CD8-positive, alpha-beta T cell (primary cell): ENCODE measurements at regions of chr1 and their contacts with region 1.

Region 1: DNA sequence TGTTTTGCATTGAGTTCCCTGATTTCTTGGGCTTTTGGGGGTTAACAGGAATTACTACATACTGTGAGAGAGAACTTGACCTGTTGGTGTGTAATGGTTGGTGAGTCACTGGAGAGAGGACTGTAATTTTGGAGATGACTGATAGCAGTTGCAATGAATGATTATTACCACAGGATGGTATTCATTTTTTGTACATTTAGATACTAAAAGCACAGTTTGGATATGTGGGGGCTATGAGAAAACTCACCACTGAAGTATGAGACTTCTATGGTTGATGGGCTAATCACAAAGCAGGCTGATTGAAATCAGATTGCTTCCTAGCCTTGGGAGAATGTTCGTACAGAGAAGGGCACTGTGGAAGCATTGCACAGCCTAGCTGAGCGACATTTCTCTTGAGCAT is 1571.3 kb upstream of the PRMT6 start:
- DNase-seq: no peak
- ATAC-seq: no peak
- H3K4me3 ChIP-seq: no peak overlapping the region
- H3K4me3 Mint-ChIP-seq: no peak overlapping the region
- H3K27ac ChIP-seq: no peak overlapping the region
- H3K27ac Mint-ChIP-seq: no peak overlapping the region
- H3K4me1 ChIP-seq: no peaks in the 10 kb centered on the region
- H3K4me1 Mint-ChIP-seq: no peaks in the 10 kb centered on the region
- H3K27me3 ChIP-seq: no peaks in the 10 kb centered on the region
- H3K27me3 Mint-ChIP-seq: no peaks in the 10 kb centered on the region
- CTCF ChIP-seq: no peak

Region 2: GRCh38 chr1:105467549-105467948 is 17.7 kb before region 1 on chr1:
- CTCF ChIA-PET with region 1: no interaction called
- POLR2A ChIA-PET with region 1: no interaction called
- intact Hi-C with region 1: loop called (anchors 1 kb)
- DNase-seq: no peak
- ATAC-seq: no peak
- H3K4me3 ChIP-seq: no peak overlapping the region
- H3K4me3 Mint-ChIP-seq: no peak overlapping the region
- H3K27ac ChIP-seq: no peak overlapping the region
- H3K27ac Mint-ChIP-seq: no peak overlapping the region
- H3K4me1 ChIP-seq: no peaks in the 10 kb centered on the region
- H3K4me1 Mint-ChIP-seq: no peaks in the 10 kb centered on the region
- H3K27me3 ChIP-seq: no peaks in the 10 kb centered on the region
- H3K27me3 Mint-ChIP-seq: no peaks in the 10 kb centered on the region
- CTCF ChIP-seq: no peak